Right ventricle myocardium inferior (tissue), 1 donor: ENCODE measurements at regions of chr9 and their contacts with region 1.

Region 1: DNA sequence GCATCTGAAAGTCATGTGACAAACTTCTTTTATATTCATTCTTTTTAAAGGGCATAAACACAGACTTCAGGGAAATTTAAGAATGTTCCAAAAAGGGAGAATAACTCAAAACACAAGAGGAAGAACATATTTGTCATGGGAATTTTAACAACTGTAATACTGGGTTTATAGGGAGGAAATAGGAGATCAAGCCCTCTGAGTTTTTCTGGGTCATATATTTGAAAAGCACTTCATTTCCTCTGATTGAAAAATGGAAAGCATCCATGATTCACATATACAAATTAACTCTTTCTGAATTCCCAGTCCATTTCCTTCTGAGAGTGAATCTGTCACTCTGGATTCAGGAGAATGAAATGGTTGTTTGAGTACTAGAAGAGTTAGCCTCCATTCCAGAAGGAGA is 26.8 kb downstream of the LURAP1L start:
- DNase-seq: no peak
- ATAC-seq: no peak

Region 2: DNA sequence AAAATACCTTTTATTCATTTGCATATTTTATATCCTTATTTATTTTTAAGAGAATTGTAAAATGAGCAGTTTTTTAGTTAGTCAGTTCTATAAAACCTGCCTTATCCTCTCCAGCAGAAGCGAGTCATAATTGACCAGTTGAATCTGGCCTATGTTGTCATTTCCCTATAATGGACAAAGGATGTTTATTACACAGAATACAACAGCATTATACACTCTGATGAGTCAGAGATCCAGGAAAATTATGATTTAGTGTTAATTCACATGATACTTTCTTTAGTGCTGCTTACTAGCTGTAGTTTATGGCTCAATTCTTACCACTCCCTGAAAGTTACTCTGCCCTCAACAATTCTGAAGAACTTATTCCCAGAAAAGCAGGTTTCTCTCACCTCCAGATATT is 53.6 kb before region 1 on chr9:
- intact Hi-C with region 1: loop called (anchors 2 kb)
- DNase-seq: no peak
- ATAC-seq: no peak

Region 3: GRCh38 chr9:14018081-14018480 is 1216.4 kb after region 1 on chr9:
- intact Hi-C with region 1: no loop called
- DNase-seq: no peak
- ATAC-seq: no peak